Cardiac septum (tissue), 1 donor: ENCODE measurements at regions of chr6 and their contacts with region 1.

Region 1: GRCh38 chr6:42068872-42069523 is 18.7 kb downstream of the TAF8 start:
- DNase-seq: no peak

Region 2: GRCh38 chr6:42086046-42087035 is 17.3 kb after region 1 on chr6:
- intact Hi-C with region 1: loop called (anchors 1 kb)
- DNase-seq: no peak